ENCODE measurements at regions of chr4 and their contacts with region 1.

Region 1: DNA sequence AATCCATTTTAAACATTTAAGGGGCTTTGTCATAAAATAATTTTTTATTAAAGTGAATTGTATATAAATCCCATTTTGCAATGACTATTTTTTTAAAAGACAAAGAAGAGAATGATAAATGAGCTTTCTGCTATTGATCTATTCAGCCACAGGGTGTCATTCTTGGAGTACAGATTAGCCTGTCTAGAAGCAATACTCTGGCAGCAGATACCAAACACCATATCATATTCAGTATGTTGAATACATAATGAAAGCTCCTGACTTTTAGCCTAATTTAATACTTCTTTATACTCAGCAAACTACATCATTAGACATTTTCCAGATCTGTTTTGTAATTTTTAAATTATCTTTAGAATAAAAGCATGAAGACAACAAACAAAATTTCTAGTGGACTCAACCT is 496.3 kb downstream of the PDGFC start:
- H3K4me3 ChIP-seq: no peak overlapping the region
- H3K27ac ChIP-seq: no peak overlapping the region
- H3K4me1 ChIP-seq: no peaks in the 10 kb centered on the region
- CTCF ChIP-seq: no peak

Region 2: DNA sequence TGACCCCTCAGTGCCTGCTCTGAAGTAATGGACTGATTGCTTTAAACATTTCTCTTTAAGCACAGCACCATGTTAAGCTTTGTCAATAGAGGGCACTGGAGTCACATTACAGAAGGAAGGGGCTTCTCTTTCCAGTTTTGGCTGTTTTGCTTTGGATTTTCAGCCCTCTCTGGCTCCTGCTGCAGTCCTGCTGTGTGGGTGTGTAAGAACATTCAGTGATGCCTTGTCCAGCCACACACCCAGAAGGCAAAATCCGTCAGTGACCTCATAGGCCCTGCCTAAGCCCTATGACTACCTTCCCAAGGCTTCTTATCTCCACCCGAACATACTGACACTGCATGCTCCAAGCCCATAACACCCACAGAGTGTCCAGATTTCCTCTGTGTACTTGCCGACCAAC is 306.3 kb before region 1 on chr4:
- CTCF ChIA-PET with region 1: interaction called, 13 read pairs
- POLR2A ChIA-PET with region 1: no interaction called
- H3K4me3 ChIP-seq: no peak overlapping the region
- H3K27ac ChIP-seq: no peak overlapping the region
- H3K4me1 ChIP-seq: no peaks in the 10 kb centered on the region
- CTCF ChIP-seq: peak; percentile 25; the same call in 1 of the 2 replicates

Region 3: GRCh38 chr4:156677131-156677531 is 201.8 kb after region 1 on chr4:
- CTCF ChIA-PET with region 1: interaction called, 16 read pairs
- POLR2A ChIA-PET with region 1: no interaction called
- H3K4me3 ChIP-seq: no peak overlapping the region
- H3K27ac ChIP-seq: no peak overlapping the region
- H3K4me1 ChIP-seq: no peaks in the 10 kb centered on the region
- CTCF ChIP-seq: peak; percentile 51; the same call in 1 of the 2 replicates

Region 4: GRCh38 chr4:156968479-156968984 is 493.2 kb after region 1 on chr4:
- CTCF ChIA-PET with region 1: interaction called, 12 read pairs
- POLR2A ChIA-PET with region 1: interaction called, 4 read pairs
- H3K4me3 ChIP-seq: peak overlapping the region; percentile 9
- H3K27ac ChIP-seq: peak overlapping the region; percentile 1; the same call in 1 of the 2 replicates
- H3K4me1 ChIP-seq: peaks cover 10% of the 10 kb centered on the region
- CTCF ChIP-seq: peak; percentile 47; the same call in 1 of the 2 replicates